Caco-2 (cell line): ENCODE measurements at regions of chr2 and their contacts with region 1.

Region 1: DNA sequence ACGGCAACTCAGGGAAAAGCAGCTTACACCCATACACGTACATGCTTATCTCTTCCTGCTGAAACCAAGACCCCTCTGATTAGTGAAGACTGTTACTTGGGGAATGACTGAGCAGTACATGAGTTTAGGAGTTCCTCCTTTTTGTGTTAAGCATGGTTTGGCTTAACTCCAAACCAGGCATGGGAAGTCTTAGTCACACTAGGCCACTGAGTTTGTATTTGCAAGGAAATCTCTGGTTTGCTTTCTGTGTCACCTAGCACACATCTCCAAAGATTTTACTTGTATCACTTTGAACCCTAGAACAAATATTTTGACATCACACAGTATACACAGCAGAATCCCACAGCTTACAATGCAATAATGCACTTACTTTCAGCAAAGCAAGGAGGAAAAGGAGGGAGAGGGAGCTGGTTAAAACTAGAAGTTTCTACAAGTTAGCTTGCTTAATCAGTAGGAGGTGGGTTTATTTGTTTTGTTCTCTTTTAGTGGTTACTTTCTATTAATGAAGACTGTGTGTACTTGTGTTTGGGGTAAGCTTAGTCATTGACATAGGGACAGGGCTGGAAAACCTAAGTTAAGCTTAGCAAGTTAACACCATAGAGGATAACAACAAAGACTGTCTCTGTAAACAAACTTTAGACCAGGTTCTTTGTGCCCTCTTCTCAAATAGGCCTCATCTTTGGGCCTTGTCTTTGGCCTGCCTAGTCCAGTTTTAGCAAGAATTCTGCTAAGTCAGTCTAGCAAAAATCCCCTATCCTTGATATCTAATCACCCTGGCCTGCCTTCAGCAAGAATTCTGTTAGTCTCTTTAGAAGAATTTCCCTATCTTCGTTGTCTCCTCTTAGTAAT is 219.4 kb downstream of the MREG start:
- DNase-seq: peak in 1 of 2 experiments; percentile 62
- H3K4me3 ChIP-seq: no peak overlapping the region
- H3K4me3 Mint-ChIP-seq: no peak overlapping the region
- H3K27ac Mint-ChIP-seq: peak overlapping the region; percentile 81
- H3K4me1 ChIP-seq: peaks cover 41% of the 10 kb centered on the region
- H3K4me1 Mint-ChIP-seq: peaks cover 48% of the 10 kb centered on the region
- H3K27me3 ChIP-seq: no peaks in the 10 kb centered on the region
- H3K27me3 Mint-ChIP-seq: no peaks in the 10 kb centered on the region
- CTCF ChIP-seq: no peak

Region 2: GRCh38 chr2:215505044-215505786 is 288.8 kb before region 1 on chr2:
- CTCF ChIA-PET with region 1: no interaction called
- POLR2A ChIA-PET with region 1: no interaction called
- intact Hi-C with region 1: loop called (anchors 2 kb)
- DNase-seq: peak; percentile 68 to 70
- H3K4me3 ChIP-seq: no peak overlapping the region
- H3K4me3 Mint-ChIP-seq: peak overlapping the region; percentile 54
- H3K27ac Mint-ChIP-seq: peak overlapping the region; percentile 46
- H3K4me1 ChIP-seq: peaks cover 42% of the 10 kb centered on the region
- H3K4me1 Mint-ChIP-seq: peaks cover 38% of the 10 kb centered on the region
- H3K27me3 ChIP-seq: no peaks in the 10 kb centered on the region
- H3K27me3 Mint-ChIP-seq: no peaks in the 10 kb centered on the region
- CTCF ChIP-seq: no peak

Region 3: DNA sequence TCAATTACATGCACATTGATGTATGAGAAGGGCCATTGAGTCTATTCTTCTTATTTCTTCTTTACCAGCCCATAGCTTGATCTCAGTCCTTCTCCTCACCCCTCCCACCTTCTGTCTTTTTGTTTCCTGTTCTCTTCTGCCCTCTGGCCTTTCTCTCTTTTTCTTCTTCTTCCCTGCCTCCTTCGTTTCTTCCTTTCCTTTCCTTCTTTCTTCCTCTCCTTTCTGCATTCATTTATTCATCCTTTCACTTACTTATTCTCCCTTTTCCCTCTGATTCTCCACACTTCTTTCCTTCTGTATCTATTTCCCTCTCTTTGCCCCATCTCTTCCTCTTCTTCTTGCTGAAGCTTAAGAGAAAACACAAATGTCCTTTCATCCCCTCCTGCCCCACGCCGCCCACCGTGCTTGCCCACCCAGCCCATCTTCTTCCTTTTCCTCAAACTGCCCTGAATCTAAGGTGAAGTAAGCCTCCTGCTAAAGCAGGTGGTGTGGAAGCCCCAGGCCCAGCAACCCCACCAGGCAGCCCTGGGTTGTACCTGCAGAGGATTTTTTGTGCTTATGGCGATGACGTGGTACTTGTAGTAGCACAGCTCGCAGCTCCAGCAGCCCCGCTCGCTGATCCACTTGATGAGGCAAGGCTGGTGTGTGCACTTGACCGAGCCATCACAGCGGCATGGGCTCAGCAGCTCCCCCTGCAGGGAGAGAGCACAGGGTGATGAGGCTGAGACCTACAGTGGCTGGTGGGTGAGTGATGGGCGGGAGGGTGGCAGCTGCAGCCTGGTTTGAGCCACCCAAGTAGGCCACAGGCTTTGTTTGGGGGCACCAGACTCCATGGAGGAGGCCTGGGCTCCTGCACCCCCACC is 489.3 kb after region 1 on chr2:
- CTCF ChIA-PET with region 1: no interaction called
- POLR2A ChIA-PET with region 1: no interaction called
- intact Hi-C with region 1: no loop called
- DNase-seq: peak; percentile 48 to 51
- H3K4me3 ChIP-seq: no peak overlapping the region
- H3K4me3 Mint-ChIP-seq: no peak overlapping the region
- H3K27ac Mint-ChIP-seq: no peak overlapping the region
- H3K4me1 ChIP-seq: no peaks in the 10 kb centered on the region
- H3K4me1 Mint-ChIP-seq: peaks cover 6% of the 10 kb centered on the region
- H3K27me3 ChIP-seq: no peaks in the 10 kb centered on the region; the same call in 1 of the 2 replicates
- H3K27me3 Mint-ChIP-seq: peaks cover 5% of the 10 kb centered on the region
- CTCF ChIP-seq: peak; percentile 50 to 54